GM12878 (cell line): ENCODE measurements at regions of chr6 and their contacts with region 1.

Region 1: GRCh38 chr6:2911171-2911570 is 8.1 kb upstream of the SERPINB9 start:
- DNase-seq: no peak
- ATAC-seq: peak; percentile 84
- H3K4me3 ChIP-seq: no peak overlapping the region
- H3K27ac ChIP-seq: no peak overlapping the region
- H3K4me1 ChIP-seq: peaks cover 13% of the 10 kb centered on the region
- H3K27me3 ChIP-seq: no peaks in the 10 kb centered on the region; a peak in 1 of 4 replicates
- CTCF ChIP-seq: no peak
- EP300 ChIP-seq: no peak
- POLR2A ChIP-seq: no peak
- RAD21 ChIP-seq: no peak

Region 2: DNA sequence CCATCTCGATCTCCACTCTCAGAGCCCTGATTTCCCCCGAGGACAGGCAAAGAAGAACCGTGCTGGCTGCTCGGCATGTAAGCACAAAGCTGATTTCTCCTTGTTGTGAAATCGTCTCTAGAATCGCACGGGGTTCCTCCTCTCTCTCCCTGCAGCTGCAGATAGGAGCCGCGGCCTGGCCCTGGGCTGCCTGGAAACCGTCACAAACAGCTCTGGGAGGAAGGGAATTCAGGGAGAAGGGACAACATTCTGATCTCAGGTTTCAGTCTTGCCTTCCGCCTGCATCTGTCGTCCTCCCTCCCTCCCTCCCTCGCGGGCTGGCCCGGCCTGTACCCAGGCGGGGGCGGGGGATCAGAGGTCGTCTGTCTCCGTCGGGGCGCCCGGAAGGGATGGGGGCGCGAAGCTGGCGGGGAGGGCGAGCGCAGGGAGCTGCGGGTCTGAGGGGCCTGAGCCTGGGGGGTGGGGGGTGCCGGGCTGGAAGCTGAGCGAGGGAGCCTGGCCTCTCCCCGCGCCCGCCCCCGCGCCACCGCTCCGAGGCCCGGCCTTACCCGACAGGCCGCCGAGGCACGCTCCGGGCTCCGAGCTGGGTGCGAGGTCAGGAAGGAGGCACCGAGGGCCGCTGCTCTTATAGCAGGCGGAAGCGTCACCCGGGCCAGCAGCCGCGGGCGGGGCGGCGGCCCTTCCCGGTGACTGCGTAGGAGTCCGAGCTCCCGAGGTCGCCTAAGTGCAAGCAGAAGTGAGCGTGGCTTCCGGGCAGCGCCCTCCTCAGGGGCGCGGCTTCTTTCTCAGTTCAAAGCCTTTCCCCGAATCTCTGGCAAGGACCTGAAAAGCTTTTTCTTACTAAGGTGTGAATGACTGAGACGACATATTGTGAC is 69.7 kb before region 1 on chr6 and contains the start of gene SERPINB1:
- CTCF ChIA-PET with region 1: interaction called, 143 read pairs
- POLR2A ChIA-PET with region 1: interaction called, 7 read pairs
- RAD21 ChIA-PET with region 1: interaction called, 88 read pairs
- SMC1A ChIA-PET with region 1: interaction called, 136 read pairs
- in situ Hi-C with region 1: loop called (anchors 10 kb)
- intact Hi-C with region 1: loop called (anchors 1 kb)
- DNase-seq: no peak
- ATAC-seq: peak; percentile 76
- H3K4me3 ChIP-seq: no peak within 1 kb of the TSS; the same call in 1 of the 2 replicates
- H3K27ac ChIP-seq: no peak within 1 kb of the TSS
- H3K4me1 ChIP-seq: peaks cover 4% of the 10 kb centered on the region; the same call in 1 of the 2 replicates
- H3K27me3 ChIP-seq: peaks cover 0 to 5% of the 10 kb centered on the region in 2 experiments; a peak in 3 of 4 replicates
- CTCF ChIP-seq: 0 out of 6 replicates have a peak, but pooled peaks of 1 of the 3 experiments have one; percentile 0
- EP300 ChIP-seq: no peak
- POLR2A ChIP-seq: peak; percentile 51; the same call in 1 of the 2 replicates
- RAD21 ChIP-seq: no peak
- polyA plus RNA-seq, gene SERPINB1: 0.82 to 1.8 TPM

Region 3: GRCh38 chr6:2876210-2877056 is 34.7 kb before region 1 on chr6:
- CTCF ChIA-PET with region 1: interaction called, 10 read pairs
- POLR2A ChIA-PET with region 1: no interaction called
- RAD21 ChIA-PET with region 1: interaction called, 3 read pairs
- SMC1A ChIA-PET with region 1: interaction called, 8 read pairs
- in situ Hi-C with region 1: no loop called
- intact Hi-C with region 1: no loop called
- DNase-seq: no peak
- ATAC-seq: peak; percentile 51
- H3K4me3 ChIP-seq: 0 out of 2 replicates have a peak overlapping the region, but pooled peaks have one; percentile 18
- H3K27ac ChIP-seq: no peak overlapping the region
- H3K4me1 ChIP-seq: peaks cover 36% of the 10 kb centered on the region
- H3K27me3 ChIP-seq: no peaks in the 10 kb centered on the region
- CTCF ChIP-seq: no peak
- EP300 ChIP-seq: no peak
- POLR2A ChIP-seq: no peak; the same call in 1 of the 2 replicates
- RAD21 ChIP-seq: no peak

Region 4: DNA sequence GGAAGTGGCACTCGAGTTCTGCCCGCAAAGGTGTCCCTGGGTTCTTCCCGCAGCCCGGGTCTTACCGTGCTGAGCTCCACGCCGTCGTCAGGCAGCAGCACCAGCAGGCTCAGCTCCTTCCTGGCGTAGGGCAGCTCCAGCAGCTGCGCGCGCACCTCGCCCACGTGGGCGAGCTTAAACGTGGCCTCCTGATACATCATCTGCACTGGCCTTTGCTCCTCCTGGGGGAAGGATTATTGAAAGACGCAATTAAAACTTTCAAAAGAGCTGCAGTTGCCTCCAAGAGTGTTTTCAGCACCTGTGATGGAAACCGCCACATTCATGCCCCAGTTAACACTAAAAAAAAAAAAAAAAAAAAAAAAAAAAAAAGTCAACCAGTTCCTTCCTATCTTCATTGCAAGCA is 19.4 kb before region 1 on chr6:
- CTCF ChIA-PET with region 1: interaction called, 43 read pairs
- POLR2A ChIA-PET with region 1: interaction called, 6 read pairs
- RAD21 ChIA-PET with region 1: interaction called, 13 read pairs
- SMC1A ChIA-PET with region 1: interaction called, 43 read pairs
- in situ Hi-C with region 1: no loop called
- intact Hi-C with region 1: no loop called
- DNase-seq: peak; percentile 89
- ATAC-seq: peak; percentile 93
- H3K4me3 ChIP-seq: peak overlapping the region; percentile 20; the same call in 1 of the 2 replicates
- H3K27ac ChIP-seq: no peak overlapping the region
- H3K4me1 ChIP-seq: peaks cover 4% of the 10 kb centered on the region; the same call in 1 of the 2 replicates
- H3K27me3 ChIP-seq: no peaks in the 10 kb centered on the region
- CTCF ChIP-seq: no peak
- EP300 ChIP-seq: peak; percentile 18 to 76; a peak in 1 of 4 replicates
- POLR2A ChIP-seq: peak; percentile 85
- RAD21 ChIP-seq: no peak

Region 5: GRCh38 chr6:2900821-2901644 is 10.1 kb before region 1 on chr6:
- CTCF ChIA-PET with region 1: interaction called, 43 read pairs
- POLR2A ChIA-PET with region 1: interaction called, 8 read pairs
- RAD21 ChIA-PET with region 1: interaction called, 14 read pairs
- SMC1A ChIA-PET with region 1: interaction called, 43 read pairs
- in situ Hi-C with region 1: no loop called
- intact Hi-C with region 1: no loop called
- DNase-seq: no peak
- ATAC-seq: peak; percentile 8
- H3K4me3 ChIP-seq: peak overlapping the region; percentile 57
- H3K27ac ChIP-seq: no peak overlapping the region
- H3K4me1 ChIP-seq: peaks cover 29% of the 10 kb centered on the region
- H3K27me3 ChIP-seq: no peaks in the 10 kb centered on the region; a peak in 1 of 4 replicates
- CTCF ChIP-seq: no peak
- EP300 ChIP-seq: no peak
- POLR2A ChIP-seq: 0 out of 2 replicates have a peak, but pooled peaks have one; percentile 1
- RAD21 ChIP-seq: no peak

Region 6: GRCh38 chr6:2976571-2977085 is 65.5 kb after region 1 on chr6:
- CTCF ChIA-PET with region 1: no interaction called
- POLR2A ChIA-PET with region 1: no interaction called
- RAD21 ChIA-PET with region 1: no interaction called
- SMC1A ChIA-PET with region 1: no interaction called
- in situ Hi-C with region 1: no loop called
- intact Hi-C with region 1: no loop called
- DNase-seq: no peak
- ATAC-seq: no peak
- H3K4me3 ChIP-seq: no peak overlapping the region
- H3K27ac ChIP-seq: no peak overlapping the region
- H3K4me1 ChIP-seq: no peaks in the 10 kb centered on the region
- H3K27me3 ChIP-seq: peaks cover 2 to 16% of the 10 kb centered on the region in 2 experiments; a peak in 3 of 4 replicates
- CTCF ChIP-seq: no peak
- EP300 ChIP-seq: no peak
- POLR2A ChIP-seq: no peak
- RAD21 ChIP-seq: no peak